Endothelial cell of umbilical vein (primary cell): ENCODE measurements at regions of chr5 and their contacts with region 1.

Region 1: GRCh38 chr5:141512390-141512910 is 23.6 kb downstream of the PCDHGC5 start:
- DNase-seq: peak; percentile 76
- H3K4me3 ChIP-seq: peak overlapping the region; percentile 44 to 51 (median 49)
- H3K27ac ChIP-seq: peak overlapping the region; percentile 19
- H3K4me1 ChIP-seq: peaks cover 31% of the 10 kb centered on the region
- H3K27me3 ChIP-seq: no peaks in the 10 kb centered on the region
- CTCF ChIP-seq: peak; percentile 89 to 94
- POLR2A ChIP-seq: no peak

Region 2: DNA sequence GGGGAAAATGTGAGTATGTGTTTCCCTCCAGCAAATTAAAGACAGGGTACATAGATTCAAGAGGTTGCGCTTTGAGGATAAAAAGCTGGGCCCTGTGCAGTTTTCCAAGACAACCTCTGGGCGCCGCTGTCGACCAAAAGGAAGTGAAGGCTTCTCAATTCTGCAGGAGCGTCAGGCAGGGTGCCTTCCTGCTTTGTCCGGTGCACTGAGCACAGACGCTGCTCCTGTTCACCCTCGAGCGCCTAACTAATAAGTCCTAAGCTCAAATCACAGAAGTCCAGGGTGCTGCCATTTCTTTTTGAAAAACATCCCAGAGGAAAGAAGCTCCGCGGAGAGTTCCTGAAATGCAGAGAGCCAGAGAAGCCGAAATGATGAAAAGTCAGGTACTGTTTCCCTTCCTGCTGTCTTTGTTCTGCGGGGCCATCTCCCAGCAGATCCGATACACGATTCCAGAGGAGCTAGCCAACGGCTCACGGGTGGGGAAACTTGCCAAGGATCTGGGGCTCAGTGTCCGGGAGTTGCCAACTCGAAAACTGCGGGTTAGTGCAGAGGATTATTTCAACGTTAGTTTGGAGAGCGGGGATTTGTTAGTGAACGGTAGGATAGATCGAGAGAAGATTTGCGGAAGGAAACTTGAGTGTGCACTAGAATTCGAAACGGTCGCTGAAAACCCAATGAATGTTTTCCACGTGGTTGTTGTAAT is 162.4 kb before region 1 on chr5 and contains the start of gene PCDHGB1:
- CTCF ChIA-PET with region 1: no interaction called
- POLR2A ChIA-PET with region 1: no interaction called
- dilution Hi-C with region 1: no loop called
- intact Hi-C with region 1: no loop called
- DNase-seq: no peak
- H3K4me3 ChIP-seq: no peak within 1 kb of the TSS
- H3K27ac ChIP-seq: no peak within 1 kb of the TSS
- H3K4me1 ChIP-seq: no peaks in the 10 kb centered on the region
- H3K27me3 ChIP-seq: peaks cover 25 to 48% of the 10 kb centered on the region in 2 experiments
- CTCF ChIP-seq: peak; percentile 41 to 44
- POLR2A ChIP-seq: no peak
- total RNA-seq, gene PCDHGB1: 0.58 and 0.62 TPM in 2 replicates

Region 3: DNA sequence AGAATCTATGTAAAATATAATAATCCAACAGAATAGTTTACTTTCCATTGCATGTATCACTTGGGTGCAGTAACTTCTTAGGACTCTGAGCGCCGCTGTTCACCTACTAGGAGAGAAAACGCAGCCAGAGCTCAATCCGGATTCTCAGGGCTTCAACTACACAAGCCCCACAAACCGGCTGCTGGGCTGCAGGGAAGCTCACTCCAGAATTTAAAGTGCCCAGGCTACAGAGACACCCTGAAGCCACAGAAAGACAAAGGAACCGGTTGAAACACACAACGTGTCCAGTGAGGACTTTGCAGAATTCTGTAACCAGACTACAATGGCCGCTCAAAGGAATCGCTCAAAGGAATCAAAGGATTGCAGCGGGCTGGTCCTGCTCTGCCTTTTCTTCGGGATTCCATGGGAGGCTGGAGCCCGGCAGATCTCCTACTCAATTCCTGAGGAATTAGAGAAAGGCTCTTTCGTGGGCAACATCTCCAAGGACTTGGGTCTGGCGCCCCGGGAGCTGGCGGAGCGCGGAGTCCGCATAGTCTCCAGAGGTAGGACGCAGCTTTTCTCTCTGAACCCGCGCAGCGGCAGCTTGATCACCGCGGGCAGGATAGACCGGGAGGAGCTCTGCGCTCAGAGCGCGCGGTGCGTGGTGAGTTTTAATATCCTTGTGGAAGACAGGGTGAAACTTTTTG is 99.5 kb before region 1 on chr5 and contains the start of gene PCDHGA10:
- CTCF ChIA-PET with region 1: interaction called, 20 read pairs
- POLR2A ChIA-PET with region 1: no interaction called
- dilution Hi-C with region 1: no loop called
- intact Hi-C with region 1: no loop called
- DNase-seq: peak; percentile 72
- H3K4me3 ChIP-seq: peak within 1 kb of the TSS; percentile 14 to 72 (median 34)
- H3K27ac ChIP-seq: no peak within 1 kb of the TSS
- H3K4me1 ChIP-seq: peaks cover 6% of the 10 kb centered on the region
- H3K27me3 ChIP-seq: peaks cover 48 to 84% of the 10 kb centered on the region in 2 experiments
- CTCF ChIP-seq: peak; percentile 58 to 76
- POLR2A ChIP-seq: no peak
- total RNA-seq, gene PCDHGA10: 4.4 and 5.8 TPM in 2 replicates

Region 4: GRCh38 chr5:141475625-141476131 is 36.8 kb before region 1 on chr5 and contains the start of gene PCDHGC3:
- CTCF ChIA-PET with region 1: interaction called, 40 read pairs
- POLR2A ChIA-PET with region 1: interaction called, 3 read pairs
- dilution Hi-C with region 1: no loop called
- intact Hi-C with region 1: loop called (anchors 1 kb)
- DNase-seq: peak; percentile 96
- H3K4me3 ChIP-seq: peak within 1 kb of the TSS; percentile 32 to 70 (median 50)
- H3K27ac ChIP-seq: no peak within 1 kb of the TSS
- H3K4me1 ChIP-seq: peaks cover 7% of the 10 kb centered on the region
- H3K27me3 ChIP-seq: peaks cover 0 to 5% of the 10 kb centered on the region in 2 experiments
- CTCF ChIP-seq: peak in 1 of 2 donors; percentile 8
- POLR2A ChIP-seq: no peak
- total RNA-seq, gene PCDHGC3: 25.4 and 36.1 TPM in 2 replicates

Region 5: GRCh38 chr5:141492168-141492885 is 20.1 kb before region 1 on chr5:
- CTCF ChIA-PET with region 1: interaction called, 13 read pairs
- POLR2A ChIA-PET with region 1: no interaction called
- dilution Hi-C with region 1: no loop called
- intact Hi-C with region 1: no loop called
- DNase-seq: no peak
- H3K4me3 ChIP-seq: no peak overlapping the region
- H3K27ac ChIP-seq: no peak overlapping the region
- H3K4me1 ChIP-seq: no peaks in the 10 kb centered on the region
- H3K27me3 ChIP-seq: peaks cover 10 to 25% of the 10 kb centered on the region in 2 experiments
- CTCF ChIP-seq: no peak
- POLR2A ChIP-seq: no peak

Region 6: GRCh38 chr5:141524604-141525597 is 12.5 kb after region 1 on chr5:
- CTCF ChIA-PET with region 1: interaction called, 70 read pairs
- POLR2A ChIA-PET with region 1: interaction called, 3 read pairs
- dilution Hi-C with region 1: no loop called
- intact Hi-C with region 1: loop called (anchors 1 kb)
- DNase-seq: peak; percentile 96
- H3K4me3 ChIP-seq: no peak overlapping the region
- H3K27ac ChIP-seq: peak overlapping the region; percentile 22
- H3K4me1 ChIP-seq: peaks cover 29% of the 10 kb centered on the region
- H3K27me3 ChIP-seq: no peaks in the 10 kb centered on the region
- CTCF ChIP-seq: peak; percentile 99 to 100
- POLR2A ChIP-seq: no peak